Breast epithelium (tissue), 4 donors: ENCODE measurements at regions of chrX and their contacts with region 1.

Region 1: GRCh38 chrX:138897621-138898492 is 186.3 kb upstream of the FGF13 start:
- DNase-seq: no peak
- H3K4me3 ChIP-seq: no peak overlapping the region
- H3K27ac ChIP-seq: no peak overlapping the region
- H3K4me1 ChIP-seq: no peaks in the 10 kb centered on the region
- H3K27me3 ChIP-seq: peaks cover 0 to 11% of the 10 kb centered on the region in 2 donors
- CTCF ChIP-seq: no peak
- POLR2A ChIP-seq: no peak

Region 2: GRCh38 chrX:137164329-137164728 is 1733.5 kb before region 1 on chrX:
- intact Hi-C with region 1: no loop called
- DNase-seq: no peak
- H3K4me3 ChIP-seq: no peak overlapping the region
- H3K27ac ChIP-seq: no peak overlapping the region
- H3K4me1 ChIP-seq: no peaks in the 10 kb centered on the region
- H3K27me3 ChIP-seq: peaks cover 0 to 20% of the 10 kb centered on the region in 2 donors
- CTCF ChIP-seq: no peak
- POLR2A ChIP-seq: no peak

Region 3: GRCh38 chrX:140724736-140725135 is 1826.9 kb after region 1 on chrX:
- intact Hi-C with region 1: loop called (anchors 5 kb)
- DNase-seq: no peak
- H3K4me3 ChIP-seq: no peak overlapping the region
- H3K27ac ChIP-seq: no peak overlapping the region
- H3K4me1 ChIP-seq: no peaks in the 10 kb centered on the region
- H3K27me3 ChIP-seq: peaks cover 0 to 21% of the 10 kb centered on the region in 2 donors
- CTCF ChIP-seq: no peak
- POLR2A ChIP-seq: no peak